ENCODE measurements at regions of chr17 and their contacts with region 1.

Region 1: GRCh38 chr17:27544350-27545131 is 86.4 kb upstream of the LGALS9 start:
- DNase-seq: peak; percentile 78
- ATAC-seq: peak; percentile 80
- H3K4me3 Mint-ChIP-seq: peak overlapping the region; percentile 60
- H3K27ac Mint-ChIP-seq: peak overlapping the region; percentile 82
- H3K4me1 Mint-ChIP-seq: peaks cover 79% of the 10 kb centered on the region
- H3K27me3 Mint-ChIP-seq: no peaks in the 10 kb centered on the region

Region 2: DNA sequence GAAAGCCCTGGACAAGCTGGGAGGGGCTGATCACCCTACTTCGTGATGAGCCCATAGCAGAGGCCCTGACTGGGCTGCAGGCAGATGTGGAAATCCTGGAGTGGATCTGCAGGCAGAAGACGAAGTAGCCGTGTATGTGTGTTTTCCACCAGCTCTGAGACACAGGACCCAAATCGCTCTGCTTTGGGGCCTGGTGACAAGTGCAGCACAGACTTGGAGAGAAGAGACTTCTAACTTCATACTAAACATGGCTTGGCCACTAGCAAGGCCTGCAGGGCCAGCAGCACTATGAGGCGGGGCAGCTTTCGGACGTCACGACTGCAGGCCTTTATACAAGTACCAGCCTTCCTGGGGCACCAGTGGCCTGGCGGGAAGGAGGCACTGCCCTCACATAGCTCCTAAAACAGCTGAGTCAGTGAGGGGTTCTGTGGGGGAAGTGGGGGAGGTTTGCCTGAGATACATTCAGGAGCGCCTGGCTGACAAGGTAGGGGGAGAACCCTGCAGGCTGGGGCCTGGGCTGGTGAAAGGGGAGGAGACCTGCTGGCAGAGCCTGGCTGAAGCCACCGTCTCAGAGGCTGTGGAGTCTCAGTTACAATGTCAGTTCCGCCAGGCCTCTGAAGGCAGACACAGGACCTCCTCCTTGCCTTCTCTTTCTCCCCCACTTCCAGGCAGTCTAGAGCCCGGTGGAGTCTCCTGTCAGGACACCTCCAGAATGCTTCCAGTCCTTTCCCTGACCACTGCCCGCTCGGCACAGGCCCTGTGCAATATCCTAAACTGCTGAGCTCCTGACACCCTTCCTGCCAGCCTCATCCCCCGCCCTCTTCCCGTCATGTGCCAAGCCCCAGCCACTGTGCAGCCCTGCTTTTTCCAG is 177.2 kb before region 1 on chr17:
- CTCF ChIA-PET with region 1: no interaction called
- POLR2A ChIA-PET with region 1: no interaction called
- DNase-seq: no peak
- ATAC-seq: no peak
- H3K4me3 Mint-ChIP-seq: no peak overlapping the region
- H3K27ac Mint-ChIP-seq: no peak overlapping the region
- H3K4me1 Mint-ChIP-seq: no peaks in the 10 kb centered on the region
- H3K27me3 Mint-ChIP-seq: no peaks in the 10 kb centered on the region

Region 3: GRCh38 chr17:27438348-27438998 is 106.1 kb before region 1 on chr17:
- CTCF ChIA-PET with region 1: no interaction called
- POLR2A ChIA-PET with region 1: no interaction called
- DNase-seq: no peak
- ATAC-seq: no peak
- H3K4me3 Mint-ChIP-seq: no peak overlapping the region
- H3K27ac Mint-ChIP-seq: no peak overlapping the region
- H3K4me1 Mint-ChIP-seq: peaks cover 2% of the 10 kb centered on the region
- H3K27me3 Mint-ChIP-seq: no peaks in the 10 kb centered on the region

Region 4: DNA sequence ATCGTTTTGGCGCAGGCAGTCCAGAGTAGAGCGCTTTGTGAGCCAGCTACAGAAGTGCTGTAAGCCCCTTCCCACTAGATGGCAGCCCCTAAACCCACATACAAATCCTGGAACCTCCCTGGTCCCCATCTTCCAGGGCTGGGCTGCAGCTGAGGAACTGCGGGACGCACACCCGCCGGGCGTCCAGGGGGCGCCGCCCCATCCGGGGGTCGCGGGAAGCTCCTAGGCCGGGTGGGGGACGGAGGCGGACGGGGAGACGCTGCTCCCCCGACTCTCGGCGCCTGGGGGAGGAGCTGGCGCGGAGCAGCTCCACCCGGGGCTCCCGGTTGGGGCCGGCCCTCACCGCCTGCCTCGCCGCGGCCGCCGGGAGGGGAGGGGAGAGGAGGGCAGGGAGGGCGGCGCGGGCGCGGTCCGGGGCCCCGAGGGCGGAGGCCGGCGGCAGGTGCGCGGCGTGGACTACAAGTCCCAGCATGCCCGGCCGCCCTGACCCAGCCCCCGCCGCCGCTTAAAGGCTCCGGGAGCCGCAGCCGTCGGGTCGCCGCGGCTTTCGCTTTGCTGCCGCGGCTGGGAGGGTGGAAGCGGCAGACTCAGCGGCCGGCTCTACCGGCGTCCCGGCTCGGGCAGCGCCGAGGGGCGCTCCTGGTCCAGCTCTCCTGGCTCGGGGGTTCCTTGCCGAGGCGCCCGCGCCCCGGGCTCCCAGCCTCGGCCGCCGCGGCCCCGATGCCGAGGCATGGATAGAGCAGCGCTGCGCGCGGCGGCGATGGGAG is 88.4 kb before region 1 on chr17 and contains the start of gene KSR1:
- CTCF ChIA-PET with region 1: interaction called, 12 read pairs
- POLR2A ChIA-PET with region 1: interaction called, 6 read pairs
- DNase-seq: peak; percentile 89
- ATAC-seq: peak; percentile 93
- H3K4me3 Mint-ChIP-seq: peak within 1 kb of the TSS; percentile 94
- H3K27ac Mint-ChIP-seq: peak within 1 kb of the TSS; percentile 76
- H3K4me1 Mint-ChIP-seq: peaks cover 50% of the 10 kb centered on the region
- H3K27me3 Mint-ChIP-seq: no peaks in the 10 kb centered on the region
- total RNA-seq, gene KSR1: 45.3 to 45.8 TPM

Region 5: GRCh38 chr17:27563532-27563931 is 19.0 kb after region 1 on chr17:
- CTCF ChIA-PET with region 1: interaction called, 12 read pairs
- POLR2A ChIA-PET with region 1: interaction called, 3 read pairs
- DNase-seq: peak; percentile 40
- ATAC-seq: peak; percentile 46
- H3K4me3 Mint-ChIP-seq: no peak overlapping the region
- H3K27ac Mint-ChIP-seq: peak overlapping the region; percentile 78
- H3K4me1 Mint-ChIP-seq: peaks cover 56% of the 10 kb centered on the region
- H3K27me3 Mint-ChIP-seq: no peaks in the 10 kb centered on the region

Region 6: DNA sequence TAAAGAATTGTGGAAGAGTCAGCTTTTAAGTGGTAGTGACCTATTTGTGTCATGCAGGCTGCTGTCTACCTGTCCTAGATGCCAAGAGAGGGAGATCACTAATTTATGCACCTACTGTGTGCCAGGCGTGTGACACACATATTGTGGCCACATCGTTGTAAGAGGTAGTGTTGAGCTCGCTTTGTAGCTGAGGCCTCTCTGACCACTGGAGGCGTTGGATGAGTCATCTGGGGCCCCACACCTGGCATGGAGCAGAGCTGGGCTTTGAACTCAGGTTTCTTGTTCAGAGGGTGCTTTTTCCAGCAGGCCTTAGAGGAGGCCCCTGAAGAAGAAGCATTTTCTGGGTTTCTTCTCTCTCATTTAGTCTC is 34.2 kb after region 1 on chr17:
- CTCF ChIA-PET with region 1: interaction called, 13 read pairs
- POLR2A ChIA-PET with region 1: interaction called, 4 read pairs
- DNase-seq: peak; percentile 70
- ATAC-seq: peak; percentile 81
- H3K4me3 Mint-ChIP-seq: no peak overlapping the region
- H3K27ac Mint-ChIP-seq: peak overlapping the region; percentile 86
- H3K4me1 Mint-ChIP-seq: peaks cover 79% of the 10 kb centered on the region
- H3K27me3 Mint-ChIP-seq: no peaks in the 10 kb centered on the region

Region 7: GRCh38 chr17:27640790-27641189 is 96.2 kb after region 1 on chr17:
- CTCF ChIA-PET with region 1: no interaction called
- POLR2A ChIA-PET with region 1: no interaction called
- DNase-seq: no peak
- ATAC-seq: no peak
- H3K4me3 Mint-ChIP-seq: no peak overlapping the region
- H3K27ac Mint-ChIP-seq: no peak overlapping the region
- H3K4me1 Mint-ChIP-seq: peaks cover 5% of the 10 kb centered on the region
- H3K27me3 Mint-ChIP-seq: no peaks in the 10 kb centered on the region

Region 8: GRCh38 chr17:27782791-27783206 is 238.3 kb after region 1 on chr17:
- CTCF ChIA-PET with region 1: no interaction called
- POLR2A ChIA-PET with region 1: no interaction called
- DNase-seq: no peak
- ATAC-seq: no peak
- H3K4me3 Mint-ChIP-seq: no peak overlapping the region
- H3K27ac Mint-ChIP-seq: no peak overlapping the region
- H3K4me1 Mint-ChIP-seq: no peaks in the 10 kb centered on the region
- H3K27me3 Mint-ChIP-seq: no peaks in the 10 kb centered on the region